IMR-90 (cell line): ENCODE measurements at regions of chr21 and their contacts with region 1.

Region 1: DNA sequence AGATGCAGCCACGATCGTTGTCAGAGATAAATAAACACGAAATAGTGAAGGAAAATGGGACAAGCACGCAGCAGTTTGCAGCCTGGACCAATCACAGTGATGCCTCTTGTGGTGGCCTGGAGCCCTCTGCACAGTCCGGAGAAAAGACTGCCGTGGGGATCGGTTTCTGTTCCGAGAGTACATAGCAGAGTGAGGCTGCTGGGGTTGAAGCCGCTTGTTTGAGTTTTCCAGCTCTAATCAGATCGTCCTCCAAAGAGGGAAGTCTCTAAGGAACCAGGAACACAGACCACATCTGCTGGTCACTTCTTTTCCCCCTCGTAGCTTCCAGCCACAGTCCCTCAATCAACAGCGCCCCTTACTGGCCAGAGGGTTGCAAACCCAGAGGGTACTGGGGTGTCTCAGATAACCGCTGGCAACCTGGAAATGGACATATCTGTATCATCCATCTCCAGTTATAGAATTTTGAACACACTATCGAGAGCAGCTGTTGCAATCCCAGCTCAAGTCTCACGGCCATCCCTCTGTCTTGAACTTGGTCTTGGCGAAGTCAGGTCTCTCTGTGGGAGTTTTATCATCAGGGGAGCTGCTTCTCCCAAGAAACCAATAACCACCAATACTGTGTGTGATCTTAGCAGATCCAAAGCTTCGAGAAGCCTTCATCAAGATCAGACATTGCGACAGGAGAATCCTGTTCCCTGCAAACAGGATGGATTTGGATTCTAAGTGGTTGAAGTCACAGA is 57.4 kb downstream of the OLIG1 start:
- DNase-seq: peak; percentile 65
- ATAC-seq: peak; percentile 99
- H3K4me3 ChIP-seq: peak overlapping the region; percentile 29
- H3K27ac ChIP-seq: no peak overlapping the region
- H3K4me1 ChIP-seq: no peaks in the 10 kb centered on the region
- H3K27me3 ChIP-seq: peaks cover 37% of the 10 kb centered on the region
- CTCF ChIP-seq: peak; percentile 91
- POLR2A ChIP-seq: no peak; the same call in 1 of the 2 replicates
- RAD21 ChIP-seq: peak; percentile 95

Region 2: DNA sequence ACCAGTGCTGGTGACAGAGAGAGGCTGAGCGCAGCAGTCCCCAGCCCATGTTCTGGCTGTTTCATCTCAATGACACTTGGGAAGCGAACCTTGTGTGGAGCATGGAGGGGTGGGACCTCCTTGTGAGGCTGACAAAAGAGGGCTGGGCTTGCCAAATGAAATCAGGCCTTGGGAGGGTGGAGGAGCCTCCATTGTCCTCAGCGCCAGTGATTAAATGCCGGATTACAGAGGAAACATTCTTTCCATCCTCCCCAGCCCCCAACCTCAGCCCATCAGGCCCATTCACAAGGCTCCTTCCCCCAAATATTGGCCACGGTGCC is 292.4 kb before region 1 on chr21:
- CTCF ChIA-PET with region 1: interaction called, 4 read pairs
- POLR2A ChIA-PET with region 1: no interaction called
- dilution Hi-C with region 1: no loop called
- in situ Hi-C with region 1: loop called (anchors 10 kb)
- intact Hi-C with region 1: loop called (anchors 2 kb)
- DNase-seq: no peak
- ATAC-seq: no peak
- H3K4me3 ChIP-seq: no peak overlapping the region
- H3K27ac ChIP-seq: no peak overlapping the region
- H3K4me1 ChIP-seq: no peaks in the 10 kb centered on the region
- H3K27me3 ChIP-seq: peaks cover 22% of the 10 kb centered on the region
- CTCF ChIP-seq: no peak
- POLR2A ChIP-seq: no peak
- RAD21 ChIP-seq: no peak

Region 3: DNA sequence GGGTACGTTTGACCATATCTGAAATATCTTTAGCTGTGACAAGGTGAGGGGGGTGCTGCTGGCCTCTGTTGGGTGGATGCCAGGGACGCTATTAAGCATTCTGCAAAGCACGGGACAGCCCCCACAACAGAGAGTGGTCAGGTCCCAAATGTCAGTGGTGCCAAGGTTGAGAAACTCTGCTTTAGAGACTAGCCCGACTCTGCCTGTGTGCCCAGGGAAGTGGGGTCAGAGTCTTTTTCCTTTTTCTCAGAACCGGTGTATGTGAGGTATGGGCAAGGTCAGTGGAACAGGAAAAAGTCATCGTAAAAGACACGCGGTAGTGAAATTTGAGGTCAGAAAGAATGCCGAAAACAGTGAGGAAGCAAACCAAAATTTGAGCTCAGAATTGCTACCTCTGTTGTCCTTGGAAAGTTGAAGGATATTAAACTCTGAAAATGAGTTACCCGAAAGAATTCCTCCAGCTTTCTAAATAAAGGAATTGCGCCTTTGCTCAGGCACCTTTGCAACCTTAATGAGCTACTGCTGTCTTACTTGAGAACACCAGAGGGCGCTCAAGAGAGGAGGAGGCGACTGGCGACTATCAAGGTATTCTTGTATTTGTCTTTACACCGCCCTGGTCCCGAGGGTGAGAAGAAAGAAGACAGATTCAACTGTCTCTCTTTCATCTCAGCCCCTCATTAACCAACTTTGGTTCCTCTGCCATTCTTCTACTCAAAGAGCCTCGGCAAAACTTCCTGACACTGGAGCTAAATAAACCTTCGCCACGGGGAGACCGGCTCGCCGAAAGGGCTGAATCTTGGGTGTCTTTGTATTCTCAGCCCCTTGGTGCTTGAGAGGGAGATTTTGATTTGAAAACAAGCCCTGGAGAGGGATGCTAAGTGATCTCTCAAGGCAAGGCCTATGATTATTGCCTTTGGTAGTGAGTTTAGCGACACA is 187.0 kb before region 1 on chr21:
- CTCF ChIA-PET with region 1: interaction called, 14 read pairs
- POLR2A ChIA-PET with region 1: no interaction called
- dilution Hi-C with region 1: no loop called
- in situ Hi-C with region 1: no loop called
- intact Hi-C with region 1: loop called (anchors 1 kb)
- DNase-seq: peak; percentile 43
- ATAC-seq: peak; percentile 68
- H3K4me3 ChIP-seq: no peak overlapping the region
- H3K27ac ChIP-seq: no peak overlapping the region
- H3K4me1 ChIP-seq: no peaks in the 10 kb centered on the region
- H3K27me3 ChIP-seq: peaks cover 4% of the 10 kb centered on the region; the same call in 1 of the 2 replicates
- CTCF ChIP-seq: peak; percentile 63
- POLR2A ChIP-seq: no peak
- RAD21 ChIP-seq: peak; percentile 53

Region 4: DNA sequence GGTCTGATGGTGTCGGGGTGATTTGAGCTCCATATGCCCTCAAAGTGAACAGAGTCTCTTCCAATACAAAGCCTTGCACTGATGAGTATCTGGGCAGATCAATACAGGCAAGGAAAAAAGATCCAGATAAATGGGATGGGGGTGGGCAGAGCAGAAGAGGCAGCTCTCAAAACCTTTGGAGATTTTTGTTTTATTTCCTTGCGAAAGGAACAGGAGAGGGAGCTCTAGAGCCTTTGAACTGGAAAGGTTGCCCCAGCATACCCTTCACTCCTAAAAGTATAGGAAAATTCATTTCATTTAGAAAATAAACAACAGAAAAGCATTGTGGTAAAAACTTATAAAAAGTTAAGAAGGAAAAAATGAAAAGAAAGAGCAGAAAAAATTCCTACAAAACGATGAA is 133.0 kb before region 1 on chr21:
- CTCF ChIA-PET with region 1: interaction called, 20 read pairs
- POLR2A ChIA-PET with region 1: no interaction called
- dilution Hi-C with region 1: no loop called
- in situ Hi-C with region 1: loop called (anchors 5 kb)
- intact Hi-C with region 1: loop called (anchors 1 kb)
- DNase-seq: peak; percentile 31
- ATAC-seq: peak; percentile 77
- H3K4me3 ChIP-seq: no peak overlapping the region
- H3K27ac ChIP-seq: no peak overlapping the region
- H3K4me1 ChIP-seq: no peaks in the 10 kb centered on the region
- H3K27me3 ChIP-seq: peaks cover 26% of the 10 kb centered on the region
- CTCF ChIP-seq: peak; percentile 63
- POLR2A ChIP-seq: no peak
- RAD21 ChIP-seq: peak; percentile 69

Region 5: DNA sequence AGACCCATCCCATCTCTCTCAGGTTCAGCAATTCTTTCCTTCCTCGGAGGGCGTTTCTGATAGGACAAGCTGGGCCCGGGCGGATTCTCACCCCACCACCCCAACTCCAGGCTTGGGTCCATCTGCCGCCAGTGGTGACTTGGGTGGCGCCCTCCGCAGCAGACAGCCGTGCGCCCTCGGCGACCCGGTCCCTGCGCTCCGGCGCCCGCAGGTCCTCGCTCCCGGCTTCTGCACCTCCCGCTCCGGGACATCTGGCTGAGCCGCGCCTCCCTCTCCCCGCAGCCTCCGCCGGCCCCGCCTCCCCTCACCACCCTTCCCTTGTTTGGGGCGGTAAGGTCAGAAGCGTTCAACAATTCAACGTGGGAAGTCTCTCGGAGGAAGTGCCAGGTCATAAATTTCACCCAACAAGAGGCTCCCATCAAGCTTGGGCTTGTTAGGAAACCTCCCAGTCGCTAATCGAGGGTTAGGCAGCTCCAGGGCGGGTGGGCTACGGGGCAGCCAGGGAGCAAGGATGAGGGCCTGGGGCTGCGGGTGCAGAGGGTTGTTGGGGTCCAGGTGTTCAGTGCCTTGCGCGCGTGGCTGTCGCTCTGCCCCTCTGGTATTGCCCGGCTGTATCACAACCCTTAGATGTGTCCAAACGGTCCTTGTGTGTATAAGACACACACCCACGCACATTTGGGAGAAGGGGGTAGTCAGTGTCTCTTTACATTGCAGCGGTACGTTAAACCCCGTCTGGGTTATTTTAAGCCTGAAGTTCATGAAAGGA is 17.6 kb before region 1 on chr21:
- CTCF ChIA-PET with region 1: no interaction called
- POLR2A ChIA-PET with region 1: no interaction called
- dilution Hi-C with region 1: no loop called
- in situ Hi-C with region 1: no loop called
- intact Hi-C with region 1: no loop called
- DNase-seq: no peak
- ATAC-seq: no peak
- H3K4me3 ChIP-seq: no peak overlapping the region
- H3K27ac ChIP-seq: no peak overlapping the region
- H3K4me1 ChIP-seq: no peaks in the 10 kb centered on the region
- H3K27me3 ChIP-seq: peaks cover 68% of the 10 kb centered on the region
- CTCF ChIP-seq: no peak
- POLR2A ChIP-seq: no peak
- RAD21 ChIP-seq: no peak